Lower leg skin (tissue), 4 donors: ENCODE measurements at regions of chr22 and their contacts with region 1.

Region 1: DNA sequence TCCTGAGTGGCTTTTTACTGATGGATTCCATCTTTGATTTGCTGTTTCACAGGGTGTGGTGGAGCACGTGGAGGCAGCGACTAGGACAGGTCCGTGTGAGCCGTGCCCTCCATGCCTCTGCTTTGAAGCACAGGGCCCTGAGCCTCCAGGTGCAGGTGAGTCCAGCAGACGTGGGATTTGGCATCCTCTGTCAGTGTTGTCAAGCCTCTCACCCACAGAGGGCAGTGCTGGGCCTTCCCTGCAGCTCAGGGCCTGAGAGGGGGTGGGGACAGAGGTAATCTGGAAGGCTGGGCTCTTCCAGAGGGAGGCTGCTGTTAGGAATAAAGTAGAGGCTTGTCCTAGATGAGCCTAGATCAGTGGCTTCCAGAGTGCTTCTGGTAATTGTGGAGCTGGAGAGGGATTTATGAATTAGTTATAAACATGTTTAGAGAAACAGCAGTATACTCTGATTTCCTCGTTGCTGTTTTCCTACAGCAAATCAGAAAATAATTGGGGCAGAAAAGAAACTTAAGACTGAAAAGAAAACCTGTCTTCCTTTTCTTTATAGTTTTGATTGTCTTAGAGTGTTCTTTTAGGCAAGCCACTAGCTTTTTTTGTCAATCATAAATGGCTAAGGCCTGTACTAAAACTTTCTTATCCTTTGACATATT is 65.0 kb downstream of the SFI1 start:
- DNase-seq: peak; percentile 30 to 86
- H3K4me3 ChIP-seq: no peak overlapping the region
- CTCF ChIP-seq: no peak
- POLR2A ChIP-seq: no peak

Region 2: GRCh38 chr22:31520051-31520450 is 41.3 kb before region 1 on chr22:
- intact Hi-C with region 1: no loop called
- DNase-seq: no peak
- H3K4me3 ChIP-seq: no peak overlapping the region
- CTCF ChIP-seq: no peak
- POLR2A ChIP-seq: no peak

Region 3: GRCh38 chr22:31943976-31944699 is 382.8 kb after region 1 on chr22 and contains the start of gene YWHAH:
- intact Hi-C with region 1: loop called (anchors 10 kb)
- DNase-seq: peak; percentile 90 to 99
- H3K4me3 ChIP-seq: peak within 1 kb of the TSS; percentile 82
- CTCF ChIP-seq: no peak
- POLR2A ChIP-seq: peak in 1 of 2 donors; percentile 52
- total RNA-seq, gene YWHAH: 57.8 to 94.0 (median 80.7) TPM

Region 4: DNA sequence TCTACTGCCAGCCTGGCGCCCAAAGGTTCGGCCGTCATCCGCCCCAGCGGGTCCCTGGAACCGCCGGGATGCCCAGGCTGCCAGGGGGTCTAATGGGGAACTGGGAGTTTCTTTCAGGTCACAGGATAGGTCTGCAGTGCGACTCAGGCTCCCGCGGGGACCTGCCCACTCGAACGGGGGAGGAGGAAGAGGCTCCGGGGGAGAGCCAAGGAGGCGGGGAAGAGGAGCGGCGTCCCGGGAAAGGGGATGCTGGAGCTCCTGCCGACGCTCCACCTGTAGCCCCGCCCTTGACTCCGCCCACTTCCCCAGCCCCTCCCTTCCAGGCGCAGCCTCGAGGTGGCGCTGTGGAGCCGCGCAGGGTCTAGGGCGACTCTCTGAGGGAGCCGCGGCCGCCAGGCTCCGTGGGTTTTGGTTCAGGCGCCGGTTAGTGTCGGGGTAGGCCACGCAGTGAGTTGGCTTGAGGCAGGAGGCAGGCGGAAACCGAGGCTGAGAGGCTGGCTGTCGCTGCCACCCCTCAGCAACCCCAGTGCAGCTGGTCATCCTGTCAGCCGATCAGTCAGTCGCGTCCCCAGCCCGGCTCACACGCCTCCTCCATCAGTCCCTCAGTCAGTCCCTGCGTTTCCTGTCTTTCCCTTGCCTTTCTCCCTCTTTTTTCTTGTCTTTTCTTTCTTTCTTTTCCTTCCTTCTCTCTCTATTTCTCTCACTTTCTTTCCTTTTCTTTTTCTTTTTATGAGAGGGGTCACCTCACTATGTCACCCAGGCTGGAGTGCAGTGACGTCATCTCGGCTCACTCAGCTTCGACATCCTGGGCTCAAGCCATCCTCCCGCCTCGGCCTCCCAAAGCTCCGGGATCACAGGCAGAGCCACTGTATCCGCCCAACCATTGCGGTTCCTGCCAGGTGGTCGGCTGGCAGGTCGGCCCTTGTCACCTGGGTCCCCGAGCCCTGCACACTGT is 409.4 kb after region 1 on chr22:
- intact Hi-C with region 1: loop called (anchors 5 kb)
- DNase-seq: peak; percentile 74 to 97
- H3K4me3 ChIP-seq: no peak overlapping the region
- CTCF ChIP-seq: peak in 1 of 3 donors; percentile 6
- POLR2A ChIP-seq: no peak